GM10248 (cell line): ENCODE measurements at regions of chr6 and their contacts with region 1.

Region 1: GRCh38 chr6:3748208-3749066 is 3.1 kb downstream of the PXDC1 start:
- DNase-seq: peak; percentile 66
- CTCF ChIP-seq: peak; percentile 68

Region 2: GRCh38 chr6:3785748-3786533 is 37.5 kb after region 1 on chr6:
- CTCF ChIA-PET with region 1: no interaction called
- POLR2A ChIA-PET with region 1: no interaction called
- DNase-seq: no peak
- CTCF ChIP-seq: no peak

Region 3: DNA sequence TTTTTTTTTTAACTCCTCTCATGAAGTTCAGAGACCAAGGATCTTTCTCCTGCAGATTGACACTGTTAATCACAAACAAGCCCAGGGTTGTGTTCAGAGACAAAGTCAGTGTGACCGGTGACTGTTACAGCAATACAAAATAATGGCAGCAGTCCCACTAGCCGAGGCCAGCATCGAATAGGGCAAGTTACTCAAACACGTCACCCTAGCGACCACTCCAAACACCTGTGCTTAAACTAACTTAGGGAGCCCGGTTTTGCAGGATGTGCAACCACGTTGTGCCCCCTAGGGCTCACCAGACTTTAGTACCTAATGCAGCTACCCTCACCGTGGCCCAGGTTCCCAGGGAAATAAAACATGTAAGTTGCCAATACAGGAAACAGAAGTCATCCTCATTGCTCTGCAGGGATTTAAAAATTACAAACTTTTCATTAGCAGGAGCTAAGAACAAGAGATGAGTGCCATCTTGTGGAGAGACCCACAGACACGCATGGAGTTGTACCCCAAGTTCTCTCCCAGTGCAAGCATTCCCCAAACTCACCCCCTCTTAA is 138.8 kb after region 1 on chr6:
- CTCF ChIA-PET with region 1: interaction called, 15 read pairs
- POLR2A ChIA-PET with region 1: no interaction called
- DNase-seq: peak; percentile 27
- CTCF ChIP-seq: no peak

Region 4: GRCh38 chr6:3990692-3991501 is 242.5 kb after region 1 on chr6:
- CTCF ChIA-PET with region 1: interaction called, 12 read pairs
- POLR2A ChIA-PET with region 1: no interaction called
- DNase-seq: peak; percentile 73
- CTCF ChIP-seq: peak; percentile 88

Region 5: GRCh38 chr6:4008324-4009047 is 260.0 kb after region 1 on chr6:
- CTCF ChIA-PET with region 1: interaction called, 14 read pairs
- POLR2A ChIA-PET with region 1: no interaction called
- DNase-seq: peak; percentile 41
- CTCF ChIP-seq: peak; percentile 43

Region 6: DNA sequence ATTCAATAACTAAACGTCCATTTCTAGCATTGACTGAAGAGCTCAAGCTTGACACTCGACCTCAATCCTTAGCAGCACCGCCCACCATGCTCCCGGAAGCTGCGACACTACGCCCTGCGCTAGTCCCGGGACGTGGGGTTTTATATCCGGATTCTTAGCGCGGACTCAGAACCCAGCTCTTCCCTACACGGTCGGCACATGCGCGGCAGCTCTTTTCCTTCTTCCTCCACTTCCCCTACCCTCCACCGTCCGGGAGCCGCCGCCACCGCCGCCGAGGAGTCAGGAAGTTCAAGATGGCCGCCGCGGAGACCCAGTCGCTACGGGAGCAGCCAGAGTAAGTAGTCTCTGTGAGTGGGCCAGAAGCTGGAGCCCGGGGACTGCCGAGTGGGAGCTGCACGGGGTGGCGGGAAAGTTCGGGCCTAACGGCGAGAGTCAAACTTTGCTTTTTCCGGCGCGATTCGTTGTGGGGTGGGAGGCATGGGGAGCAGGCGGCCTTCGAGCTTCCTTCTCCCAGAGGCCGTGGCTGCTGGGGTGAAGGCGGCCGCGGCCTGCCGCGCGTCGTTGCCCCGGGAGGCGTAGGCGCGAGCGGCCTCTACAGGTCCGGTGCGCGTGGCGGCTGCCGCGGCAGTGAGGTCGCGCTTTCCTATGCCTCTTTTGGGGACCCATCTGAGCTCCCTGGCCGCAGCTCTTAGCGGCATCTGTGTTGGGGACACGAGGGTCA is 272.9 kb after region 1 on chr6:
- CTCF ChIA-PET with region 1: interaction called, 14 read pairs
- POLR2A ChIA-PET with region 1: no interaction called
- DNase-seq: peak; percentile 83
- CTCF ChIP-seq: peak; percentile 58